CD8-positive, alpha-beta T cell (primary cell): ENCODE measurements at regions of chr4 and their contacts with region 1.

Region 1: GRCh38 chr4:140359562-140360427 is 13.7 kb upstream of the SCOC start:
- DNase-seq: peak; percentile 44 to 84 (median 78)
- ATAC-seq: peak; percentile 90
- H3K4me3 ChIP-seq: no peak overlapping the region
- H3K4me3 Mint-ChIP-seq: no peak overlapping the region
- H3K27ac ChIP-seq: no peak overlapping the region
- H3K27ac Mint-ChIP-seq: no peak overlapping the region
- H3K4me1 ChIP-seq: no peaks in the 10 kb centered on the region
- H3K4me1 Mint-ChIP-seq: no peaks in the 10 kb centered on the region
- H3K27me3 ChIP-seq: no peaks in the 10 kb centered on the region
- H3K27me3 Mint-ChIP-seq: no peaks in the 10 kb centered on the region
- CTCF ChIP-seq: peak; percentile 89

Region 2: GRCh38 chr4:139734875-139735380 is 624.9 kb before region 1 on chr4:
- CTCF ChIA-PET with region 1: no interaction called
- POLR2A ChIA-PET with region 1: no interaction called
- intact Hi-C with region 1: loop called in 1 of 2 experiments (anchors 5 kb)
- DNase-seq: peak; percentile 8 to 68 (median 50)
- ATAC-seq: peak; percentile 77
- H3K4me3 ChIP-seq: peak overlapping the region; percentile 28 to 58
- H3K4me3 Mint-ChIP-seq: peak overlapping the region; percentile 76
- H3K27ac ChIP-seq: no peak overlapping the region
- H3K27ac Mint-ChIP-seq: no peak overlapping the region
- H3K4me1 ChIP-seq: peaks cover 7% of the 10 kb centered on the region
- H3K4me1 Mint-ChIP-seq: peaks cover 15% of the 10 kb centered on the region
- H3K27me3 ChIP-seq: peaks cover 8 to 9% of the 10 kb centered on the region in 2 experiments
- H3K27me3 Mint-ChIP-seq: peaks cover 23% of the 10 kb centered on the region
- CTCF ChIP-seq: peak; percentile 22

Region 3: GRCh38 chr4:140343303-140343702 is 16.5 kb before region 1 on chr4:
- CTCF ChIA-PET with region 1: interaction called, 27 read pairs
- POLR2A ChIA-PET with region 1: no interaction called
- intact Hi-C with region 1: no loop called
- DNase-seq: no peak
- ATAC-seq: no peak
- H3K4me3 ChIP-seq: no peak overlapping the region
- H3K4me3 Mint-ChIP-seq: no peak overlapping the region
- H3K27ac ChIP-seq: no peak overlapping the region
- H3K27ac Mint-ChIP-seq: no peak overlapping the region
- H3K4me1 ChIP-seq: peaks cover 4% of the 10 kb centered on the region
- H3K4me1 Mint-ChIP-seq: peaks cover 5% of the 10 kb centered on the region
- H3K27me3 ChIP-seq: no peaks in the 10 kb centered on the region
- H3K27me3 Mint-ChIP-seq: peaks cover 24% of the 10 kb centered on the region
- CTCF ChIP-seq: no peak

Region 4: DNA sequence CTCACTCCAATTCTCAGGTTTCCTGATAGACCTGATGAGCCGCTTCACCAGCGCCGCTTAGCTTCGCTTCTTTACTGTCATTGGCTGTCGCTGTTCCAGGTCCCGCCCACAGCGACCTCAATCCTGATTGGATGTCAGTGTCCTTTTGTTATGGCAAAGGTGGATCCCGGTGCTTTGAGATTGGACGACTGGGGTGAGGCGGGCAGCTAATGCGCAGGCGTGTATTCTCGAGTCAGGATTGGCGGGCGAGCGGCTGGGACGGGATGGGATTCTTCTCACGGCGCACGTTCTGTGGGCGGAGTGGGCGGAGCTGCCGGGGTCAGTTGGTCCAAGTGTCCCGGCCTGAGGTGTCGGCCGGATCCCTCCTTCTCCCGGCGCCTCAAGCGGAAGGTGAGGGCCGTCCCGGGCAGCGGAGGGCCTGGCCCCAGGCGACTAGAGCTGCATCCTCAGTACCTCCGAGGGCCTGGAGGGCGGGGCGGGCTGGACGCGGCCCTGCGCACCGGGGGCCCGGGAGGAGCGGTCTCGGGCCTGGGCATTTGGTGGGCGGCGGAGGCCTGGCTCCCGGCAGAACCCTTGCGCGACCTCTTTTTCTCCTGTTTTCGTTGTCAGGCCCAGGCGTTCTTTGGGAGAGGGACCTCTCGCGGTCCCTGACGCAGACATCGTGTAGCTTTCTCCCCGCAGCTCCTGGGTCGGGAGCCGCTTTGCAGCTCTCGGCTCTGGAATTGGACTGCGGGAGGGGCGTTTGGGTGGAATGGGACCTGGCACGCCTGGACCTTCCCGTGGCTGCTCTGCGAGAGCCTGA is 13.7 kb after region 1 on chr4 and contains the start of gene SCOC:
- CTCF ChIA-PET with region 1: interaction called, 28 read pairs
- POLR2A ChIA-PET with region 1: interaction called, 5 read pairs
- intact Hi-C with region 1: loop called in 1 of 2 experiments (anchors 1 kb)
- DNase-seq: peak; percentile 90 to 98 (median 95)
- ATAC-seq: peak; percentile 94
- H3K4me3 ChIP-seq: peak within 1 kb of the TSS; percentile 85 to 92
- H3K4me3 Mint-ChIP-seq: no peak within 1 kb of the TSS
- H3K27ac ChIP-seq: peak within 1 kb of the TSS; percentile 81 to 85
- H3K27ac Mint-ChIP-seq: peak within 1 kb of the TSS; percentile 76
- H3K4me1 ChIP-seq: peaks cover 20% of the 10 kb centered on the region
- H3K4me1 Mint-ChIP-seq: peaks cover 37% of the 10 kb centered on the region
- H3K27me3 ChIP-seq: no peaks in the 10 kb centered on the region
- H3K27me3 Mint-ChIP-seq: no peaks in the 10 kb centered on the region
- CTCF ChIP-seq: no peak
- total RNA-seq, gene SCOC: 7.1 to 8.3 TPM

Region 5: GRCh38 chr4:140427106-140427961 is 67.5 kb after region 1 on chr4 and contains the start of gene CLGN:
- CTCF ChIA-PET with region 1: no interaction called
- POLR2A ChIA-PET with region 1: no interaction called
- intact Hi-C with region 1: loop called in 1 of 2 experiments (anchors 2 kb)
- DNase-seq: peak in 8 of 9 experiments; percentile 7 to 57 (median 32)
- ATAC-seq: peak; percentile 61
- H3K4me3 ChIP-seq: peak within 1 kb of the TSS; percentile 45 to 63
- H3K4me3 Mint-ChIP-seq: peak within 1 kb of the TSS; percentile 77
- H3K27ac ChIP-seq: no peak within 1 kb of the TSS
- H3K27ac Mint-ChIP-seq: no peak within 1 kb of the TSS
- H3K4me1 ChIP-seq: peaks cover 7% of the 10 kb centered on the region
- H3K4me1 Mint-ChIP-seq: peaks cover 7% of the 10 kb centered on the region
- H3K27me3 ChIP-seq: peaks cover 0 to 11% of the 10 kb centered on the region in 2 experiments
- H3K27me3 Mint-ChIP-seq: peaks cover 40% of the 10 kb centered on the region
- CTCF ChIP-seq: no peak
- total RNA-seq, gene CLGN: not detected

Region 6: DNA sequence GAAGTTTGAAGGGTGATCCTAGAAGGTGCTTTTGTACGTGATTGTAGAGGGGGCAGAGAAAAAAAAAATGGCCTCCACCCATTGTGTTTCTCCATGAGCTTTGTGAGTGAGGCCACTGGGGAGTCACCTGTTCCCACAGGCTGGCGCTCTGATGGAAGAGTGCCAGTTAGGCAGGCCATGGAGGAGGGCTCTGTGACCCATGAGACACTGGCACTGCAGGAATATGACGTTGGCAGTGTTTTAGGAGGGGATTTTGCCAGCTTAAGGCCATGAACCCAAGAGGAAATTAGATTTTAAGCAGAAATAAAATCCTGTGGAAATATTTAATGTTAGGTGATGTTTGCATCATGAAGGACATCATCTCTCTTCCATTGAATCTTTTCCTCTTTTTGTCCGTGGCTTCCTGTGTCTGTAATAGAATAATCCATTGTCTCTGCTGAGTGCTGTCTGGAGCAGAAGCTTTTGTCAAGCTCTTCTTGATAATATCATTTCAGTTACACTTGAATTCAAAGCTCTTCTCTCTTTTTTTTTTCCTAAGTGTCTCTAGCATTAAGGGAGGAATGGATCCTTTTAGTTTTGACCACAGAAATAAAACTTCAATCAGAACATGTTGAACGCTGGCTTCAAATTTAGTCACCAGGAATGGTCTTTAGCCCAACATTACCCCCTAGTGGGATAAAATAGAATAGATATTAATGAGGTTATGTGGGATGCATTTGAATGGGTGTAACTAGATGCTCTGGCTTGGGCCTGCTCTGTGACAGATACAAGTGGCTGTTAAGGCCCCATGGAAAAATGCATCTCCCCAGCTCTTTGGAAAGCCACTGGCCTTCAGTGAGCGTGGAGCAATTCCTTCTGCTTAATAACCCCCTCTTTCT is 250.0 kb after region 1 on chr4:
- CTCF ChIA-PET with region 1: interaction called, 16 read pairs
- POLR2A ChIA-PET with region 1: no interaction called
- intact Hi-C with region 1: loop called in 1 of 2 experiments (anchors 1 kb)
- DNase-seq: peak in 2 of 9 experiments; percentile 13 to 48
- ATAC-seq: peak; percentile 46
- H3K4me3 ChIP-seq: no peak overlapping the region
- H3K4me3 Mint-ChIP-seq: no peak overlapping the region
- H3K27ac ChIP-seq: no peak overlapping the region
- H3K27ac Mint-ChIP-seq: no peak overlapping the region
- H3K4me1 ChIP-seq: no peaks in the 10 kb centered on the region
- H3K4me1 Mint-ChIP-seq: no peaks in the 10 kb centered on the region
- H3K27me3 ChIP-seq: peaks cover 0 to 4% of the 10 kb centered on the region in 2 experiments
- H3K27me3 Mint-ChIP-seq: peaks cover 10% of the 10 kb centered on the region
- CTCF ChIP-seq: peak; percentile 45

Region 7: DNA sequence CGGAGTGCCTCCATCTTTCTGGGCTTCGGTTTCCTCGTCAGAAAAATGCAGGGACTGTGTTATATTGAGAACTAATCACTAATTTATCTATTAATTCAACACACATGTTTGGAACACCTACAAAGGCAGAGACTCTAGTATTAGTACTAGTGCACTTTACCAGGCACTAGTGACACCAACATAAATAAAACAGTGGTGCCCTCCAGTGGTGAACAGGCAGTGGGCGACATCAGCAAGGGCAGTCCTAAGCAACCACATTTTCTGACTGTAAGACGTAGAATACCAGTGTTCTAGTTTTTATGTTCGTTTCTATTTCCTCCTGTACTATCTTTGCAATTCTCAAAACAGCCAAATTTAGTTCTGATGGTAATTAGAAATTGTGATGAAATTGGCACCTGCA is 278.0 kb after region 1 on chr4:
- CTCF ChIA-PET with region 1: interaction called, 4 read pairs
- POLR2A ChIA-PET with region 1: no interaction called
- intact Hi-C with region 1: loop called in 1 of 2 experiments (anchors 1 kb)
- DNase-seq: peak in 4 of 9 experiments; percentile 17 to 52 (median 26)
- ATAC-seq: no peak
- H3K4me3 ChIP-seq: no peak overlapping the region
- H3K4me3 Mint-ChIP-seq: no peak overlapping the region
- H3K27ac ChIP-seq: no peak overlapping the region
- H3K27ac Mint-ChIP-seq: no peak overlapping the region
- H3K4me1 ChIP-seq: no peaks in the 10 kb centered on the region
- H3K4me1 Mint-ChIP-seq: no peaks in the 10 kb centered on the region
- H3K27me3 ChIP-seq: no peaks in the 10 kb centered on the region
- H3K27me3 Mint-ChIP-seq: peaks cover 7% of the 10 kb centered on the region
- CTCF ChIP-seq: peak; percentile 45